ENCODE measurements at regions of chr1 and their contacts with region 1.

Region 1: GRCh38 chr1:109598655-109599054 is 20.8 kb downstream of the GNAT2 start:
- DNase-seq: no peak
- H3K4me3 ChIP-seq: no peak overlapping the region
- H3K27ac ChIP-seq: no peak overlapping the region
- H3K4me1 ChIP-seq: no peaks in the 10 kb centered on the region
- H3K27me3 ChIP-seq: no peaks in the 10 kb centered on the region
- CTCF ChIP-seq: peak; percentile 36 to 64 (median 61)
- EP300 ChIP-seq: no peak
- POLR2A ChIP-seq: no peak
- RAD21 ChIP-seq: peak; percentile 57 to 67

Region 2: GRCh38 chr1:109620841-109621286 is 22.2 kb after region 1 on chr1:
- CTCF ChIA-PET with region 1: interaction called, 92 read pairs
- POLR2A ChIA-PET with region 1: interaction called, 11 read pairs
- DNase-seq: peak in 1 of 2 experiments; percentile 89
- H3K4me3 ChIP-seq: peak overlapping the region; percentile 69 to 85 (median 78)
- H3K27ac ChIP-seq: no peak overlapping the region
- H3K4me1 ChIP-seq: peaks cover 4 to 25% (median 12%) of the 10 kb centered on the region in 4 experiments
- H3K27me3 ChIP-seq: no peaks in the 10 kb centered on the region
- CTCF ChIP-seq: no peak
- EP300 ChIP-seq: no peak
- POLR2A ChIP-seq: no peak
- RAD21 ChIP-seq: no peak

Region 3: DNA sequence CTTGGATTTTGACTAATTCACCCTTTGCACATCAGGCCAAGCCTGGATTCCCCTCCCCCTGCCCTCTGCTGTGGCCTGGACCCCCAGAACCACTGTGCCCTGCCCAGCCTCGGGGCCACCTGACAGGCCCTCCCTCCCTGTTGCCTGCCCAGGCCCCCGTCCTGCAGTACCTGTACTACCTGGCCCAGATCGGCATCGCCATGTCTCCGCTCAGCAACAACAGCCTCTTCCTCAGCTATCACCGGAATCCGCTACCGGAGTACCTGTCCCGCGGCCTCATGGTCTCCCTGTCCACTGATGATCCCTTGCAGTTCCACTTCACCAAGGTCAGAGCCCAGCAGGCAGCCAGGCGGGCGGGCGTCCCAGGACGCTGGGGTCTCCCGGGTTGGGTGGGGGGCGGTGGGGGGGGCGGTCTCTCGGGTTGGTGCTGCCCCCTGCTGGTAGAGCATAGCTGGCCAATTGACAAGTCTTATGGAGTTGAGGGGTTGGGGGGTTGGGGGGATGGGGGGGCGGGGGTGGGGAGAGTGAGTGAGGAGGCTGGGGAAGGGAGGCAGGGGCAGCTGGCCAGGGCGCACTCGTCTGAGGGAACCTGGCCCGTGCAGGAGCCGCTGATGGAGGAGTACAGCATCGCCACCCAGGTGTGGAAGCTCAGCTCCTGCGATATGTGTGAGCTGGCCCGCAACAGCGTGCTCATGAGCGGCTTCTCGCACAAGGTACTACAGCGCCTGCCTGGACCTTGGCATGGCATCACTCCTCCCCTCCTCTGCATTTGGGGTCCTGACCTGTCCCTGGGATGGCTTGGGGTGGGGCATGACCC is 31.6 kb after region 1 on chr1:
- CTCF ChIA-PET with region 1: interaction called, 73 read pairs
- POLR2A ChIA-PET with region 1: interaction called, 3 read pairs
- DNase-seq: peak in 1 of 2 experiments; percentile 69
- H3K4me3 ChIP-seq: no peak overlapping the region
- H3K27ac ChIP-seq: no peak overlapping the region
- H3K4me1 ChIP-seq: peaks cover 0 to 2% (median 0%) of the 10 kb centered on the region in 4 experiments; a peak in 2 of 7 replicates
- H3K27me3 ChIP-seq: no peaks in the 10 kb centered on the region
- CTCF ChIP-seq: no peak
- EP300 ChIP-seq: no peak
- POLR2A ChIP-seq: no peak
- RAD21 ChIP-seq: no peak; a peak in 1 of 4 replicates

Measured in H1 (cell line).